ENCODE measurements at regions of chr11 and their contacts with region 1.

Region 1: GRCh38 chr11:104705490-104706190 is 192.6 kb downstream of the CASP12 start:
- DNase-seq: peak; percentile 83 to 90 (median 88)
- H3K4me3 ChIP-seq: peak overlapping the region; percentile 33 to 37
- H3K4me3 Mint-ChIP-seq: peak overlapping the region; percentile 71 to 85 (median 80)
- H3K27ac ChIP-seq: peak overlapping the region; percentile 72
- H3K27ac Mint-ChIP-seq: peak overlapping the region; percentile 86 to 99 (median 96)
- H3K4me1 ChIP-seq: peaks cover 75% of the 10 kb centered on the region
- H3K4me1 Mint-ChIP-seq: peaks cover 48 to 62% (median 55%) of the 10 kb centered on the region in 4 donors
- H3K27me3 ChIP-seq: no peaks in the 10 kb centered on the region
- H3K27me3 Mint-ChIP-seq: no peaks in the 10 kb centered on the region

Region 2: DNA sequence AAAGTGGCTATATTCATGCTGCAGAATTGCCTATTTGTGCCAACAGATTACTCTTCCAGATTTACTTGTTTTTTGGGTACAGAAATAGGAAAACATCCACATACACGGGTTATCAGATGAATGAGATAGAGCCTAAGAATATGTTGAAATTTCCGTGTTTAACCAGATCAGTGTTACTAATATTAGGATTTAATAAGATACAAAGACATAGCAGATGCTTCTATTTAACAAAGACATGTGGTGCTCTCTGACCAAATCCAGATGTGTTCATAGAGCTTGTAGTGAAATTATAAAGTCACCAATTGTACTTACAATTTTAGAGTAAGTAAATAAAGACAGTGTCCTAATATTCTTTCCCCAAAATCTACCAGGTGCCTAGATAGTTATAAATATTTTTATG is 15.4 kb before region 1 on chr11:
- CTCF ChIA-PET with region 1: no interaction called
- POLR2A ChIA-PET with region 1: interaction called, 5 read pairs
- intact Hi-C with region 1: loop called (anchors 2 kb)
- DNase-seq: no peak
- H3K4me3 ChIP-seq: no peak overlapping the region
- H3K4me3 Mint-ChIP-seq: no peak overlapping the region
- H3K27ac ChIP-seq: no peak overlapping the region
- H3K27ac Mint-ChIP-seq: no peak overlapping the region
- H3K4me1 ChIP-seq: peaks cover 6% of the 10 kb centered on the region
- H3K4me1 Mint-ChIP-seq: peaks cover 4 to 7% (median 5%) of the 10 kb centered on the region in 4 donors
- H3K27me3 ChIP-seq: no peaks in the 10 kb centered on the region
- H3K27me3 Mint-ChIP-seq: no peaks in the 10 kb centered on the region

Region 3: DNA sequence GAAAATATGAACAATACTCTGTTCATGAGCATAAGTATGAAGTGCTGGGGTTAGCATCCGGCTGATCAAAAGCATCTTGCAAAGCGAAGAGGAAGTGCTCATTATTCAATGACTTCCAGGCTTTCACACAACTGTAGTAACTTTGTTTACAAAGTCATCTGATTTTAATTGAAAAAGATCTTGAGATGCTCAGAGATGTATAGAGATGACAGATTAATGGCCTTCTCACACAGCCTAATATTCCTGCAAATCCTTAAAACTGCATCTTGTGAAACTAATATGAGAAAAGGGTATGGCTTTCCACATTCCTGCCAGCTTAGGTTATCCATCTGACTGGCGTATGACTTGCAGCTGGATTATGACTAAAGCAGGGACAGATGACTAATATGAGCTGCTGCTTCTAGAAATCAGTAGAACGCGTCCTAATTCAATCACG is 67.2 kb after region 1 on chr11:
- CTCF ChIA-PET with region 1: no interaction called
- POLR2A ChIA-PET with region 1: interaction called, 6 read pairs
- intact Hi-C with region 1: loop called (anchors 5 kb)
- DNase-seq: peak in 4 of 5 donors; percentile 8 to 25 (median 18)
- H3K4me3 ChIP-seq: no peak overlapping the region
- H3K4me3 Mint-ChIP-seq: peak overlapping the region in 3 of 8 donors; percentile 13 to 46 (median 28)
- H3K27ac ChIP-seq: no peak overlapping the region
- H3K27ac Mint-ChIP-seq: peak overlapping the region in 5 of 7 donors; percentile 11 to 53 (median 30)
- H3K4me1 ChIP-seq: peaks cover 15% of the 10 kb centered on the region
- H3K4me1 Mint-ChIP-seq: peaks cover 14 to 23% (median 14%) of the 10 kb centered on the region in 4 donors
- H3K27me3 ChIP-seq: no peaks in the 10 kb centered on the region
- H3K27me3 Mint-ChIP-seq: peaks cover 0 to 2% of the 10 kb centered on the region in 2 donors

Region 4: GRCh38 chr11:104823638-104824037 is 118.0 kb after region 1 on chr11:
- CTCF ChIA-PET with region 1: no interaction called
- POLR2A ChIA-PET with region 1: no interaction called
- intact Hi-C with region 1: no loop called
- DNase-seq: peak in 1 of 5 donors; percentile 2
- H3K4me3 ChIP-seq: no peak overlapping the region
- H3K4me3 Mint-ChIP-seq: no peak overlapping the region
- H3K27ac ChIP-seq: no peak overlapping the region
- H3K27ac Mint-ChIP-seq: no peak overlapping the region
- H3K4me1 ChIP-seq: no peaks in the 10 kb centered on the region
- H3K4me1 Mint-ChIP-seq: peaks cover 2 to 8% (median 5%) of the 10 kb centered on the region in 4 donors
- H3K27me3 ChIP-seq: no peaks in the 10 kb centered on the region
- H3K27me3 Mint-ChIP-seq: no peaks in the 10 kb centered on the region

Region 5: DNA sequence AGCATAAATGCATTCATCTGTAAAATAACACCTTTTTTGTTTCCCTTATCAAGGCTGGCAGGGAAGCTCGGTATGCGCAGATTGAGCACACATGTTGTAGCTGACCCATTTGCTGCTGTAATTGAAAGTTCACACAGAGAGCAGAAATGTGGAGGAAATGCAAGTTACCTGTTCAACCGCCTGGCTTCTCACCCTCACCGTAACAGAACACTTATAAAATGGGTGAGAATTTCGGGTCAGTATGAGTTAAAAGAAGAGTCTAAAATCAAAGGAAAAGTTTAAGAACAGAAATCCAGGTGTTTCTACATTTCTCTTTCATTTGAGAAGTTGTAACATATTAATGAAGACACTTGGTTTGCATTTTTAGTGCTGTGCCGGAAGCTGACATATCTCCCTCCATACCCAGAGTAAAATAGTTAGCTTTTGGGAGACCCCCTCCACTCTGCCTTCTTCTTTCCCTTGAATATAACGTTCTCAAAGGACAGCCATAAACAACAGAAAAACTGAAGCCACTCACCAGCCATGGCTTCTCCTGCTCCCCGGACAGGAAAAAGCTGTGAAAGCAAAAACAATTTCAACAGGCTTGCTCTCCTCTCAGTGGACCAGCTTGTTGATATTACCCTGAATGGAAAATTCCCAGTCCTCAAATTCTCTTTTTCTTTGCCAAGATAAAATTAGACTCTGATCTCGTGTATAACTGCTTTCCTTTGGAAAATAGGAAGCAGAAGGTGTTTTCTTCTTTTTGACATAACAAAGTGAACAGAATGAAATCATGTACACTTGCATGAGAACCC is 192.4 kb after region 1 on chr11 and contains the start of gene CASP12:
- CTCF ChIA-PET with region 1: no interaction called
- POLR2A ChIA-PET with region 1: interaction called, 10 read pairs
- intact Hi-C with region 1: no loop called
- DNase-seq: peak in 3 of 5 donors; percentile 18 to 37 (median 30)
- H3K4me3 ChIP-seq: peak within 1 kb of the TSS; percentile 5 to 8
- H3K4me3 Mint-ChIP-seq: peak within 1 kb of the TSS; percentile 75 to 89 (median 84)
- H3K27ac ChIP-seq: peak within 1 kb of the TSS; percentile 24
- H3K27ac Mint-ChIP-seq: peak within 1 kb of the TSS; percentile 67 to 96 (median 91)
- H3K4me1 ChIP-seq: peaks cover 34% of the 10 kb centered on the region
- H3K4me1 Mint-ChIP-seq: peaks cover 27 to 50% (median 39%) of the 10 kb centered on the region in 4 donors
- H3K27me3 ChIP-seq: no peaks in the 10 kb centered on the region
- H3K27me3 Mint-ChIP-seq: no peaks in the 10 kb centered on the region
- total RNA-seq, gene CASP12: not detected

Region 6: GRCh38 chr11:104926771-104927611 is 221.4 kb after region 1 on chr11:
- CTCF ChIA-PET with region 1: no interaction called
- POLR2A ChIA-PET with region 1: no interaction called
- intact Hi-C with region 1: no loop called
- DNase-seq: peak in 1 of 5 donors; percentile 35
- H3K4me3 ChIP-seq: no peak overlapping the region
- H3K4me3 Mint-ChIP-seq: no peak overlapping the region
- H3K27ac ChIP-seq: no peak overlapping the region
- H3K27ac Mint-ChIP-seq: no peak overlapping the region
- H3K4me1 ChIP-seq: no peaks in the 10 kb centered on the region
- H3K4me1 Mint-ChIP-seq: peaks cover 1 to 10% (median 2%) of the 10 kb centered on the region in 4 donors
- H3K27me3 ChIP-seq: no peaks in the 10 kb centered on the region
- H3K27me3 Mint-ChIP-seq: no peaks in the 10 kb centered on the region

Region 7: GRCh38 chr11:104968355-104968855 is 262.8 kb after region 1 on chr11 and contains the start of gene CASP4:
- CTCF ChIA-PET with region 1: no interaction called
- POLR2A ChIA-PET with region 1: interaction called, 5 read pairs
- intact Hi-C with region 1: loop called (anchors 5 kb)
- DNase-seq: peak in 4 of 5 donors; percentile 46 to 57 (median 55)
- H3K4me3 ChIP-seq: peak within 1 kb of the TSS; percentile 78 to 81
- H3K4me3 Mint-ChIP-seq: peak within 1 kb of the TSS; percentile 92 to 98 (median 95)
- H3K27ac ChIP-seq: peak within 1 kb of the TSS; percentile 82
- H3K27ac Mint-ChIP-seq: peak within 1 kb of the TSS; percentile 90 to 99 (median 98)
- H3K4me1 ChIP-seq: peaks cover 42% of the 10 kb centered on the region
- H3K4me1 Mint-ChIP-seq: peaks cover 29 to 43% (median 36%) of the 10 kb centered on the region in 4 donors
- H3K27me3 ChIP-seq: no peaks in the 10 kb centered on the region
- H3K27me3 Mint-ChIP-seq: no peaks in the 10 kb centered on the region
- total RNA-seq, gene CASP4: 97.9 to 98.4 TPM